Panc1 (cell line): ENCODE measurements at regions of chr16 and their contacts with region 1.

Region 1: GRCh38 chr16:55021595-55022475 is 91.2 kb downstream of the IRX5 start:
- DNase-seq: no peak
- ATAC-seq: no peak
- H3K4me3 ChIP-seq: no peak overlapping the region
- H3K27ac ChIP-seq: no peak overlapping the region
- H3K4me1 ChIP-seq: no peaks in the 10 kb centered on the region
- H3K27me3 ChIP-seq: no peaks in the 10 kb centered on the region
- CTCF ChIP-seq: 0 out of 2 replicates have a peak, but pooled peaks have one; percentile 17

Region 2: DNA sequence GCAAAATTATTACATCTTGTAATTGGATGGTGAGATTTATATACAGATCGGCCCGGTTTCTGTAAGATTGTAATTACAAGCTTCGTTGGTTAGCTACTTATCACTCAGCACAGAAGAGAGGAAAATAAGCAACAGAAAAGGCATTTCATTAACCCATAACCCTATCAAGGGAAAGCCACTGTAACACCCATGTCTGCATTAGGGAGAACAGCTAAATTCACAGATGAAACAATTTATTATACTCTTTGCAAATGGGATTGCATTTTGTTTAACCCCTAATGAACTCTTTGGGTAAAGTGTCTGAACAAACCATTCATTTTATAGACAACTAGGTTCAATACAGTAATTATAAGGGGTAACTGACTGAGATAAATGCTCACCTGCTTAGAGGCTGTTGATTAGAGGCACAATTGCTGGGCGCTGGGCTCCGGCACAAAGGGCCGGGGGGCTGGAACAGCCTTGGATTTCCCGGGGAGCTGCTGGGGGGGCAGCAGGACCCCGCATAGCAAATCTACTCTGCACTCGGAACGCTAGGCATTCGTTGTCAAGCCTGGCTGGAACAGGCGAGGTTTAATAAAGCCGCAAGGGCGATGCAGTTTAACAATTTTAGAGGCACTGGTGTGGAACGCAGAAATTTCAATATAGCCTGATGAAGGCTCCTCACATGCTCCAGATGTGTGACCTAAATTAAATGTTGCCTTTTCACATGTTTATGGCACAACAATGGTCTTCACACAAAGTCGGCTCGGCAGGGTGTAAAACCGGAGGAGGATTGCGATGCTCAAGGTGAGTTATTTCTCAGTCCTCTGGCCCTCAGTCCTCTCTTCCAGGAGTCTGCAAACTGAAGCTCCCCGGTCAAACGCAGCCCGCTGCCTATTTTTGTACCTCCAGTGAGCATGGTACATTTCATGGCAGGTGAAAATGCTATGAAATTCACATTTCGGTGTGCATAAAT is 168.1 kb after region 1 on chr16:
- CTCF ChIA-PET with region 1: no interaction called
- POLR2A ChIA-PET with region 1: no interaction called
- in situ Hi-C with region 1: no loop called
- intact Hi-C with region 1: loop called (anchors 10 kb)
- DNase-seq: no peak
- ATAC-seq: no peak
- H3K4me3 ChIP-seq: no peak overlapping the region
- H3K27ac ChIP-seq: no peak overlapping the region
- H3K4me1 ChIP-seq: no peaks in the 10 kb centered on the region
- H3K27me3 ChIP-seq: peaks cover 9% of the 10 kb centered on the region
- CTCF ChIP-seq: no peak